Panc1 (cell line): ENCODE measurements at regions of chr10 and their contacts with region 1.

Region 1: GRCh38 chr10:91251430-91252056 is 31.1 kb downstream of the PCGF5 start:
- DNase-seq: peak; percentile 33
- ATAC-seq: peak; percentile 80
- H3K4me3 ChIP-seq: no peak overlapping the region
- H3K27ac ChIP-seq: no peak overlapping the region
- H3K4me1 ChIP-seq: no peaks in the 10 kb centered on the region
- H3K27me3 ChIP-seq: no peaks in the 10 kb centered on the region
- CTCF ChIP-seq: peak; percentile 87; the same call in 1 of the 2 replicates

Region 2: DNA sequence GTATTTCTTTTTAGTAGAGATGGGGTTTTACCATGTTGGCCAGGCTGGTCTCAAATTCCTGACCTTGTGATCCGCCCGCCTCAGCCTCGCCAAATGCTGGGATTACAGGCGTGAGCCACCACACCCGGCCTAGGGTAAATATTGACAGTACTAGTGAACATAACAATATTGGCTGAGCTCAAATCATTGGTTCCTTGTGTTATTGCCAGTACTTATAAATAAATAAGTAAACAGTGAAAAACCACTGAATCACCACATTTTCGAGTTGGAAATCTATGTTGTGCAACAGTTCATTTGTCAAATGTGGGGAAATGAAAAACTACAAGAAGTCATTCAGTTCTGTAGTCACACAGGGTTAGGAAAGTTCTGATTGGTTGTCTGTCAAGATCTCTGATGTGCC is 364.0 kb before region 1 on chr10:
- CTCF ChIA-PET with region 1: no interaction called
- POLR2A ChIA-PET with region 1: no interaction called
- in situ Hi-C with region 1: no loop called
- intact Hi-C with region 1: no loop called
- DNase-seq: no peak
- ATAC-seq: no peak
- H3K4me3 ChIP-seq: no peak overlapping the region
- H3K27ac ChIP-seq: no peak overlapping the region
- H3K4me1 ChIP-seq: no peaks in the 10 kb centered on the region
- H3K27me3 ChIP-seq: no peaks in the 10 kb centered on the region
- CTCF ChIP-seq: no peak

Region 3: DNA sequence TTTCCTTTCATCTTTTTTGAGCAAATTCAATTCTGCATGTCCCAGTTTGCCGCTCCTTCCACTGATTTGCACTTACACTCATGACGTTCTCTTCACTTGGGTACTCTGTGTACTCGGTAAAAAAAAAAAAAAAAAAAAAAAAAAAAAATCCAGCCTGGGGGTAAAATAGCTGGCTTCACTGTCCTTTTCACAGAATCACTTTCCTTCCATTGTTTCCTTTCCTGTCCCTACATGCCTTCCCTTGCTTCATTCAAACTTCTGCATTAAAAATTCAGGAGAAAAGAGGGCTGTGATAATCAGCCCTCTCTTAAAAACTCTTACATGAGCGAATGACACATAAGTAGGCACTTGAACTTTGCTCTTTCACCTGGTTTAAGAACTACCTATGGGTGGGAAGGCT is 339.4 kb before region 1 on chr10:
- CTCF ChIA-PET with region 1: interaction called, 20 read pairs
- POLR2A ChIA-PET with region 1: no interaction called
- in situ Hi-C with region 1: no loop called
- intact Hi-C with region 1: loop called (anchors 1 kb)
- DNase-seq: no peak
- ATAC-seq: no peak
- H3K4me3 ChIP-seq: no peak overlapping the region
- H3K27ac ChIP-seq: no peak overlapping the region
- H3K4me1 ChIP-seq: no peaks in the 10 kb centered on the region
- H3K27me3 ChIP-seq: no peaks in the 10 kb centered on the region; the same call in 1 of the 2 replicates
- CTCF ChIP-seq: no peak

Region 4: DNA sequence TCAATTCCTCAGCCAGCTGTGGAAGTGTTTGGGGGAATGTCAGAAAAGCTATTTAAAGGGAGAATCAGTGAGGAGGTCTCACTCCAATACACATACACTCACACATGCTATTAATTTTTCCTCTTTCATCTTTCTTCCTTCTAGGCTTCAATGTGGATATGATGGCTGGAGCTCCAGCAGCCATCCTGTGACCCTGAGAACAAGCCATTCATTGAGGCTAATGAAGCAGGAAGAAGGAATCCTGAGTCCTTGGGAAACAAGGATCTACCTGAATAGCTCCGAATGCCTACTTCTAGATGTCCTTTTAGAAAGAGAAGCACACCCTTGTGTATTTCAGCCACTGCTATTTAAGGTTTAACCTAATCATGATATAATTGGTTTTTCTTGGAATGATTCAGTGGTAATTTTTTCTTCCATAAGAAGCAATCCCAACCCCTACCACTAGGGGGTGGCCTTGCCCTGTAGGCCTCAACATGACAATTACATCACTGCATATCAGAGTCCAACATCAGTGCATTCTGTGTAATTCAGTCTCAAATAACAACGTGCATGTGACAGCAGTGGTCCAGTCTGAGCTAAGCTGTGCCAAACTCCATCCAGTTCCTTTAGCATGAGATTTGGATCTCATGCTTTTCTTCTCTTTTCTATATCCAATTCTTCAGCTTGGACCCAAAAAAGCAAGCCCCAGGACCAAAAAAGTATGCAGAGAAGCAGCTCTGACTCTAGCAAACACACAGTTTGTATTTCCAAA is 245.4 kb before region 1 on chr10:
- CTCF ChIA-PET with region 1: interaction called, 5 read pairs
- POLR2A ChIA-PET with region 1: no interaction called
- in situ Hi-C with region 1: no loop called
- intact Hi-C with region 1: loop called (anchors 1 kb)
- DNase-seq: peak; percentile 41
- ATAC-seq: no peak
- H3K4me3 ChIP-seq: no peak overlapping the region
- H3K27ac ChIP-seq: no peak overlapping the region
- H3K4me1 ChIP-seq: no peaks in the 10 kb centered on the region
- H3K27me3 ChIP-seq: no peaks in the 10 kb centered on the region
- CTCF ChIP-seq: peak; percentile 94

Region 5: GRCh38 chr10:91088300-91089140 is 163.0 kb before region 1 on chr10:
- CTCF ChIA-PET with region 1: interaction called, 3 read pairs
- POLR2A ChIA-PET with region 1: interaction called, 3 read pairs
- in situ Hi-C with region 1: no loop called
- intact Hi-C with region 1: loop called (anchors 5 kb)
- DNase-seq: no peak
- ATAC-seq: peak; percentile 72
- H3K4me3 ChIP-seq: no peak overlapping the region
- H3K27ac ChIP-seq: no peak overlapping the region
- H3K4me1 ChIP-seq: no peaks in the 10 kb centered on the region
- H3K27me3 ChIP-seq: peaks cover 3% of the 10 kb centered on the region; the same call in 1 of the 2 replicates
- CTCF ChIP-seq: peak; percentile 36

Region 6: DNA sequence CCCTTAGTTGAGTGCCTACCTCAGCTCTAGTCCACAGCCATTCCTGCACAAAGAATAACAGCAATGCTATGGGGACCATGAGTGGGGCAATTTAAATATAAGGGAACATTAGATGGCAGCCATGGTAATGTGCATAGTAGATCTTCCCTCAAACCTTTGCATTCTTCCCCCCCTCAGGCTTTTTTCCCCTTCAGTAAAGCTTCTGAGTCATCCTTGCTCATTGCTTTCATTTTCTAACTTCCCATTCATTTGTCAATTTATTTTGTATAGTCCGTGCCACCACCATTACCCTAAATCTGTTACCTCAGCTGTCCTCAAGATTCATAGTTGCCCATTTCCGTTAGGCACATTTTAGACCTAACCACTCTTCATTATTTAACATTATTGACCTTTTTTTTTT is 169.3 kb after region 1 on chr10:
- CTCF ChIA-PET with region 1: no interaction called
- POLR2A ChIA-PET with region 1: no interaction called
- in situ Hi-C with region 1: no loop called
- intact Hi-C with region 1: no loop called
- DNase-seq: no peak
- ATAC-seq: peak; percentile 56; the same call in 1 of the 2 replicates
- H3K4me3 ChIP-seq: no peak overlapping the region
- H3K27ac ChIP-seq: no peak overlapping the region
- H3K4me1 ChIP-seq: no peaks in the 10 kb centered on the region
- H3K27me3 ChIP-seq: no peaks in the 10 kb centered on the region
- CTCF ChIP-seq: no peak